Panc1 (cell line): ENCODE measurements at regions of chr6 and their contacts with region 1.

Region 1: GRCh38 chr6:34745277-34746103 is 11.8 kb upstream of the SNRPC start:
- DNase-seq: no peak
- ATAC-seq: no peak
- H3K4me3 ChIP-seq: no peak overlapping the region
- H3K27ac ChIP-seq: no peak overlapping the region
- H3K4me1 ChIP-seq: no peaks in the 10 kb centered on the region
- H3K27me3 ChIP-seq: no peaks in the 10 kb centered on the region
- CTCF ChIP-seq: no peak

Region 2: DNA sequence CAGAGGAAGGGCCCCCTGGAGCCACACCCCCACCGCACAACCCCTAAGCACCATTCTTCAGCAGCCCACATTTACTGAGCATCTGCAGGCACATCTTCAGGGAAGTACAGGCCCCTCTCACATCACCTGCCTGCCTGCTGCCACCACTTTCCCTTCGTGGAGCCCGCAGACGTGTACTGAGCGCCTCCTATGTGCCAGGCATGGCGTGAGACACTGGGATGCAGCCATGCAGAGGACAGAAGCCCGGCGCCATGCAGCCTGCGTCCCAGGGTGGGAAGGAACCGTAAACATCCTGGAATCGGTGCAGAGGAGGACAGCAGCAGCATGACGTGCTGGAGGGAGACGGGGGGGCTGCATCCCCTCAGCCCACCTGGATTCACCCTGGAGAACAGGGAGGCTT is 677.7 kb before region 1 on chr6:
- CTCF ChIA-PET with region 1: no interaction called
- POLR2A ChIA-PET with region 1: no interaction called
- in situ Hi-C with region 1: no loop called
- intact Hi-C with region 1: no loop called
- DNase-seq: no peak
- ATAC-seq: peak; percentile 73
- H3K4me3 ChIP-seq: no peak overlapping the region
- H3K27ac ChIP-seq: no peak overlapping the region
- H3K4me1 ChIP-seq: 0 out of 2 replicates have a peak, but pooled peaks cover 2% of the 10 kb centered on the region
- H3K27me3 ChIP-seq: peaks cover 5% of the 10 kb centered on the region
- CTCF ChIP-seq: peak; percentile 71

Region 3: GRCh38 chr6:36432151-36432633 is 1686.7 kb after region 1 on chr6:
- CTCF ChIA-PET with region 1: interaction called, 12 read pairs
- POLR2A ChIA-PET with region 1: no interaction called
- in situ Hi-C with region 1: no loop called
- intact Hi-C with region 1: no loop called
- DNase-seq: no peak
- ATAC-seq: no peak
- H3K4me3 ChIP-seq: no peak overlapping the region
- H3K27ac ChIP-seq: no peak overlapping the region
- H3K4me1 ChIP-seq: no peaks in the 10 kb centered on the region
- H3K27me3 ChIP-seq: no peaks in the 10 kb centered on the region
- CTCF ChIP-seq: no peak